ENCODE measurements at regions of chr6 and their contacts with region 1.

Region 1: GRCh38 chr6:127516666-127517273 is 2.4 kb downstream of the MTCL3 start:
- DNase-seq: peak in 2 of 3 donors; percentile 24 to 43
- H3K4me3 ChIP-seq: peak overlapping the region in 2 of 3 experiments; percentile 38 to 71
- H3K4me3 Mint-ChIP-seq: peak overlapping the region; percentile 79 to 93
- H3K27ac ChIP-seq: no peak overlapping the region
- H3K27ac Mint-ChIP-seq: no peak overlapping the region
- H3K4me1 ChIP-seq: peaks cover 28 to 29% of the 10 kb centered on the region in 2 donors
- H3K4me1 Mint-ChIP-seq: peaks cover 36% of the 10 kb centered on the region
- H3K27me3 ChIP-seq: peaks cover 75 to 99% of the 10 kb centered on the region in 2 donors
- H3K27me3 Mint-ChIP-seq: peaks cover 73 to 82% (median 77%) of the 10 kb centered on the region in 3 donors
- CTCF ChIP-seq: peak; percentile 83

Region 2: GRCh38 chr6:127459231-127459641 is 57.5 kb before region 1 on chr6 and contains the start of gene KIAA0408:
- intact Hi-C with region 1: loop called in 1 of 2 experiments (anchors 10 kb)
- DNase-seq: no peak
- H3K4me3 ChIP-seq: peak within 1 kb of the TSS in 1 of 3 experiments; percentile 58
- H3K4me3 Mint-ChIP-seq: peak within 1 kb of the TSS in 1 of 2 donors; percentile 34
- H3K27ac ChIP-seq: peak within 1 kb of the TSS in 1 of 2 donors; percentile 82
- H3K27ac Mint-ChIP-seq: peak within 1 kb of the TSS in 6 of 7 donors; percentile 53 to 95 (median 88)
- H3K4me1 ChIP-seq: peaks cover 31 to 32% of the 10 kb centered on the region in 2 donors
- H3K4me1 Mint-ChIP-seq: peaks cover 35% of the 10 kb centered on the region
- H3K27me3 ChIP-seq: no peaks in the 10 kb centered on the region
- H3K27me3 Mint-ChIP-seq: peaks cover 0 to 2% (median 0%) of the 10 kb centered on the region in 3 donors
- CTCF ChIP-seq: no peak
- polyA plus RNA-seq, gene KIAA0408: 0.03 TPM in 1 of 3 donors, not detected in the others

Measured in CD14-positive monocyte (primary cell).